Activated CD4-positive, alpha-beta memory T cell treated with anti-CD3 and anti-CD28 coated beads for 36 hours (primary cell): ENCODE measurements at regions of chr3 and their contacts with region 1.

Region 1: DNA sequence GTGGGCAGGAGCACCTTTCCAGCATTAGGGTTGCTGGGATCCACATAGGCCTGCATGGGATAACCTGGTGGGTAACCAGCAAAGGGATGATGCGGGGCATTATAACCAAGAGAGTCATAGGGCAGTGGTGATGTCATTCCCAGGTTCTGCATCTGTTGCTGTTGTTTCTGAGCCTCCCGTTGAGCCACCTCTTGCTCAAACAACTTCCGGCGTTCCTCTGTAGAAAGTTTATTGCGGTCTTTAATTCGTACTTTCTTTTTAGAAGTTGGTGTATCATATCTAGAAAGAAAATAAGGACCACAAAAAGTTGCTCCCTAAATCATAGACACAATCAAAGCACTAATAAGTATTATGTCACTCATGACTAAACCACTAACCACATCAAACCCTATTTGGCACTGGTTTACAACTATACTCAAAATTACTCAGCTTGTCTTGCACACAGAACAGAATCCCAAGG is 77.8 kb downstream of the NBEAL2 start:
- DNase-seq: peak; percentile 75
- H3K4me3 Mint-ChIP-seq: peak overlapping the region; percentile 10
- H3K27ac Mint-ChIP-seq: peak overlapping the region; percentile 33
- H3K4me1 Mint-ChIP-seq: peaks cover 41% of the 10 kb centered on the region
- H3K27me3 Mint-ChIP-seq: no peaks in the 10 kb centered on the region

Region 2: GRCh38 chr3:46960081-46960701 is 97.1 kb before region 1 on chr3:
- CTCF ChIA-PET with region 1: no interaction called
- POLR2A ChIA-PET with region 1: no interaction called
- intact Hi-C with region 1: loop called (anchors 5 kb)
- DNase-seq: peak; percentile 38
- H3K4me3 Mint-ChIP-seq: no peak overlapping the region
- H3K27ac Mint-ChIP-seq: peak overlapping the region; percentile 92
- H3K4me1 Mint-ChIP-seq: peaks cover 80% of the 10 kb centered on the region
- H3K27me3 Mint-ChIP-seq: no peaks in the 10 kb centered on the region

Region 3: GRCh38 chr3:47016934-47017435 is 40.3 kb before region 1 on chr3:
- CTCF ChIA-PET with region 1: no interaction called
- POLR2A ChIA-PET with region 1: no interaction called
- intact Hi-C with region 1: loop called (anchors 1 kb)
- DNase-seq: peak; percentile 71
- H3K4me3 Mint-ChIP-seq: peak overlapping the region; percentile 8
- H3K27ac Mint-ChIP-seq: peak overlapping the region; percentile 92
- H3K4me1 Mint-ChIP-seq: peaks cover 47% of the 10 kb centered on the region
- H3K27me3 Mint-ChIP-seq: no peaks in the 10 kb centered on the region

Region 4: GRCh38 chr3:47035634-47036033 is 21.6 kb before region 1 on chr3:
- CTCF ChIA-PET with region 1: no interaction called
- POLR2A ChIA-PET with region 1: no interaction called
- intact Hi-C with region 1: loop called (anchors 1 kb)
- DNase-seq: no peak
- H3K4me3 Mint-ChIP-seq: no peak overlapping the region
- H3K27ac Mint-ChIP-seq: no peak overlapping the region
- H3K4me1 Mint-ChIP-seq: peaks cover 43% of the 10 kb centered on the region
- H3K27me3 Mint-ChIP-seq: no peaks in the 10 kb centered on the region

Region 5: GRCh38 chr3:47042231-47042791 is 14.9 kb before region 1 on chr3:
- CTCF ChIA-PET with region 1: interaction called, 3 read pairs
- POLR2A ChIA-PET with region 1: interaction called, 3 read pairs
- intact Hi-C with region 1: loop called (anchors 1 kb)
- DNase-seq: no peak
- H3K4me3 Mint-ChIP-seq: no peak overlapping the region
- H3K27ac Mint-ChIP-seq: no peak overlapping the region
- H3K4me1 Mint-ChIP-seq: peaks cover 24% of the 10 kb centered on the region
- H3K27me3 Mint-ChIP-seq: no peaks in the 10 kb centered on the region

Region 6: GRCh38 chr3:47079432-47079831 is 22.2 kb after region 1 on chr3:
- CTCF ChIA-PET with region 1: no interaction called
- POLR2A ChIA-PET with region 1: no interaction called
- intact Hi-C with region 1: loop called (anchors 1 kb)
- DNase-seq: no peak
- H3K4me3 Mint-ChIP-seq: no peak overlapping the region
- H3K27ac Mint-ChIP-seq: peak overlapping the region; percentile 9
- H3K4me1 Mint-ChIP-seq: peaks cover 24% of the 10 kb centered on the region
- H3K27me3 Mint-ChIP-seq: no peaks in the 10 kb centered on the region

Region 7: GRCh38 chr3:47282424-47283192 is 225.4 kb after region 1 on chr3 and contains the starts of genes KIF9 and KLHL18:
- CTCF ChIA-PET with region 1: no interaction called
- POLR2A ChIA-PET with region 1: no interaction called
- intact Hi-C with region 1: loop called (anchors 10 kb)
- DNase-seq: peak; percentile 97
- H3K4me3 Mint-ChIP-seq: peak within 1 kb of the TSS; percentile 98
- H3K27ac Mint-ChIP-seq: peak within 1 kb of the TSS; percentile 100
- H3K4me1 Mint-ChIP-seq: peaks cover 39% of the 10 kb centered on the region
- H3K27me3 Mint-ChIP-seq: peaks cover 3% of the 10 kb centered on the region
- total RNA-seq, gene KIF9: 3.3 to 4.9 TPM
- total RNA-seq, gene KLHL18: 21.2 to 23.7 TPM